ENCODE measurements at regions of chr1 and their contacts with region 1.

Region 1: GRCh38 chr1:29793101-29793546 is 556.8 kb downstream of the PTPRU start:
- DNase-seq: peak; percentile 79
- ATAC-seq: peak; percentile 76 to 81

Region 2: DNA sequence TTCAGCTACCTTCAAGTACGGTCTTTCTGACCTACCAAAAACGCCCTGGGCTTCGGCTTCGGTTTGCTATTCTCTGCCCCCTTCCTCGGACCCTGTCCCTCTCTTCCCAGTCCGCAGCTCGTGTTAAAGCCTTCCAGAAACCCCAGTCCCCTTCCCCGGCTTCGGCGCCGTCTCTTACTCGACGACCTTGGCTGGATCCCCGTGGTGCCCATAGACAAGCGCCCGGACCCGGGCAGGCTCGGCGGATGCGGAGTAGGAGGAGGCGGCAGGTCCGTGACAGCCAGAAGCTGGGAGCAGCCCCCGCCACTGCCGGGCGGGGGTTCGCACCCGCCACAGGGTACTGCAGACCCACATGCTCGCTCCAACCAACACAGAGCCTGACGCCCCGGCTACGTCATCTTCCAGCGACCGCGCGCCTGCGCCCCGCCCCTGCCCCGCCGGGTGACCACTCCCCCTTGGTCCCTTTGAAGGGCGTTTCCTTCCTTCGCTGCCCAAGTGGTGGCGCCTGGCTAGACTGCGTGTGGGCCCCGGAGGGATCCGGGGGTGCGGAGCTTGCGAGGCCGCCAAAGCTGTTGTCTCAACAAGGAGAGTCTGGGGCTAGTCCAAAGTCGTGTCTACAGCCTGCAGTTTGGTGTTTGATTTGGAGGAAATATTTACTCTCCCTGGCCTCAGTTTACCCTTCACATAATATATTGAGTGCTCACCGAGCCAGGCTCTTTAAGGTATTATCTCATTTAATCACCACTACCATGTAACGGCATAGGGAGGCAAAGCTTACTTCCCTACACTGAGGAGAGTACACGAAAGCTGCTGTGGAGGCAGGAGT is 562.4 kb before region 1 on chr1 and contains the start of gene MECR:
- intact Hi-C with region 1: loop called in 1 of 2 experiments (anchors 10 kb)
- DNase-seq: peak; percentile 95
- ATAC-seq: peak; percentile 99
- total RNA-seq, gene MECR: 25.8 to 26.2 TPM

Region 3: DNA sequence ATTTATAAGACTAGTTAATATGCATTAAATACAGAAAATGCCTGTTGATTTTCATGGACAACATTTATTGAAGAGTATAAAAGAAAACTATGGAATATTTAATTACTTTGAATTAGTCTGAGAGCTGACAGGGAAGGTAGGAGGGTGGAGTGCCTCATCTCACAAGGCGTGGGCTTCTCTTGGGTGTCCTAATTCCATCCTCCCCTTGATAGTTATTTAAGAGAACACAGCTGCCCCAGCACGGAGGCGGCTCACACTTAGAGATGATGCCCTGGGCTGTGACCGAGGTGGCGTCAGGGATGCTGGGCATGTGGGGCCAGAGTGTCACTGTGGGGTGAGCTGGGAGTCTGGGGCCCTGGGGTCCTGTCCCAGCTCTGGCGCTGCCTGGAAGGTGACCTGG is 63.8 kb before region 1 on chr1:
- intact Hi-C with region 1: no loop called
- DNase-seq: no peak
- ATAC-seq: no peak

Region 4: GRCh38 chr1:30085811-30086770 is 293.0 kb after region 1 on chr1:
- intact Hi-C with region 1: loop called (anchors 2 to 5 kb)
- DNase-seq: peak; percentile 63
- ATAC-seq: peak; percentile 35 to 43

Region 5: DNA sequence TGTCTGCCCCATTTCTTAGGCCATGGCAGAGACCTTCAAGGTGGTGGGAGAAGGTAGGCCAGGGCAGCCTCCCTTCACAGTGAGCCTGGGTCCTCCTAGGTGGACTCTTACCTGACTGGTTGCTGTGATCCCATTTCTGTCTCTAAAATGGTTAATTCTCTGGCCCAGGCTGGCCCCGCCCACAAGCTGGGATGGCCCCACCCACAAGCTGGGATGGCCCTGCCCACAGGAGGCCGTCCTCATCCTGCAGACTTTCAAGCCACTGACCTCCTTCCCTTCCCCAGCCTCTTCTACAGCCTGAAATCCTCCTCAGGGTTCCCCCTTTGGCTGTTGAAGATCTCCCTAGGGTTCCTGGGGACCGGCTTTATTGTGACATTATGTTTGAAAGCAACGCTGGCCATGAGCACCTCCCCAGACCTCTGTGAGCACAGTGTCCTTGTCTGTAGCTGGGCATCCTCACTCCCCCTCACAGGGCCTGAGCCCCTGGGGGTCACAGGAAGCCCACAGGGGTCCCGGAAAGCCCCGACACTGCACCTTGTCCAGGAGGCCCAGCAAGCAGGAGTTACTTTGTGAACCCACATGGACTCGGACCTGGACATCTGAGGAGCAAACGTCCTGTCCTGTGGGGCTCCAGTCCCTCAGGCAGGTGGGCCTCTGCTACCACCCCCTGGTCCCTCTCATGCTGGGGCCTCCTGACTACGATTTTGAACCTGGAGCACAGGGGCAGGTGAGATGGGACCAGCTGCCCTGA is 308.5 kb after region 1 on chr1:
- intact Hi-C with region 1: loop called in 1 of 2 experiments (anchors 5 kb)
- DNase-seq: no peak
- ATAC-seq: peak in 1 of 2 donors; percentile 37

Measured in left cardiac atrium (tissue), 4 donors.